BJ (cell line): ENCODE measurements at regions of chr11 and their contacts with region 1.

Region 1: GRCh38 chr11:114262681-114263512 is 33.3 kb upstream of the NNMT start:
- DNase-seq: no peak
- H3K4me3 ChIP-seq: no peak overlapping the region
- H3K27me3 ChIP-seq: peaks cover 9% of the 10 kb centered on the region
- CTCF ChIP-seq: peak; percentile 84

Region 2: DNA sequence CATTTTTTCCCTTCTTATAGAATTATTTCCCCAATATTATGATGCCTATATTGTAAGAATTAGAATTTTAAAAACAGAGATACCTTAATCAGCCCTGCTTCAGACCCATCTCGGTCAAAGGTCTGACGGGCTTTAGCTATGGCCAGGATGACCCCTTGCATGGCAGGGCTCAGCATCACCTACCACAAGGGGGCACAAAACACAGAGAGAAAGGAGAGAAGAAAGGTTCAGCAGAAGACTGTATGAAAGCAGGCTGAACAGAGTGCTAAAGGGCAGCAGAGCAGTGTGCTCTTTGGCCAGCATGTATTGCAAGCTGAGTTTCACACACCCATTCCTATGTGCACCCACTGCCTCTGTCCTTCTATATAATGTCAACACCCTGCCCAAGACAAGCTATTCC is 456.5 kb before region 1 on chr11:
- CTCF ChIA-PET with region 1: interaction called, 10 read pairs
- POLR2A ChIA-PET with region 1: no interaction called
- DNase-seq: no peak
- H3K4me3 ChIP-seq: no peak overlapping the region
- H3K27me3 ChIP-seq: no peaks in the 10 kb centered on the region
- CTCF ChIP-seq: peak; percentile 42

Region 3: GRCh38 chr11:113896156-113896879 is 366.6 kb before region 1 on chr11:
- CTCF ChIA-PET with region 1: interaction called, 213 read pairs
- POLR2A ChIA-PET with region 1: no interaction called
- DNase-seq: no peak
- H3K4me3 ChIP-seq: no peak overlapping the region
- H3K27me3 ChIP-seq: peaks cover 4% of the 10 kb centered on the region
- CTCF ChIP-seq: peak; percentile 80

Region 4: GRCh38 chr11:114001416-114001815 is 261.5 kb before region 1 on chr11:
- CTCF ChIA-PET with region 1: interaction called, 218 read pairs
- POLR2A ChIA-PET with region 1: interaction called, 3 read pairs
- DNase-seq: no peak
- H3K4me3 ChIP-seq: no peak overlapping the region
- H3K27me3 ChIP-seq: no peaks in the 10 kb centered on the region
- CTCF ChIP-seq: no peak

Region 5: GRCh38 chr11:114026355-114026754 is 236.5 kb before region 1 on chr11:
- CTCF ChIA-PET with region 1: interaction called, 88 read pairs
- POLR2A ChIA-PET with region 1: no interaction called
- DNase-seq: no peak
- H3K4me3 ChIP-seq: no peak overlapping the region
- H3K27me3 ChIP-seq: peaks cover 8% of the 10 kb centered on the region
- CTCF ChIP-seq: no peak

Region 6: GRCh38 chr11:114044042-114044871 is 218.6 kb before region 1 on chr11:
- CTCF ChIA-PET with region 1: interaction called, 206 read pairs
- POLR2A ChIA-PET with region 1: no interaction called
- DNase-seq: no peak
- H3K4me3 ChIP-seq: no peak overlapping the region
- H3K27me3 ChIP-seq: peaks cover 5% of the 10 kb centered on the region
- CTCF ChIP-seq: no peak

Region 7: DNA sequence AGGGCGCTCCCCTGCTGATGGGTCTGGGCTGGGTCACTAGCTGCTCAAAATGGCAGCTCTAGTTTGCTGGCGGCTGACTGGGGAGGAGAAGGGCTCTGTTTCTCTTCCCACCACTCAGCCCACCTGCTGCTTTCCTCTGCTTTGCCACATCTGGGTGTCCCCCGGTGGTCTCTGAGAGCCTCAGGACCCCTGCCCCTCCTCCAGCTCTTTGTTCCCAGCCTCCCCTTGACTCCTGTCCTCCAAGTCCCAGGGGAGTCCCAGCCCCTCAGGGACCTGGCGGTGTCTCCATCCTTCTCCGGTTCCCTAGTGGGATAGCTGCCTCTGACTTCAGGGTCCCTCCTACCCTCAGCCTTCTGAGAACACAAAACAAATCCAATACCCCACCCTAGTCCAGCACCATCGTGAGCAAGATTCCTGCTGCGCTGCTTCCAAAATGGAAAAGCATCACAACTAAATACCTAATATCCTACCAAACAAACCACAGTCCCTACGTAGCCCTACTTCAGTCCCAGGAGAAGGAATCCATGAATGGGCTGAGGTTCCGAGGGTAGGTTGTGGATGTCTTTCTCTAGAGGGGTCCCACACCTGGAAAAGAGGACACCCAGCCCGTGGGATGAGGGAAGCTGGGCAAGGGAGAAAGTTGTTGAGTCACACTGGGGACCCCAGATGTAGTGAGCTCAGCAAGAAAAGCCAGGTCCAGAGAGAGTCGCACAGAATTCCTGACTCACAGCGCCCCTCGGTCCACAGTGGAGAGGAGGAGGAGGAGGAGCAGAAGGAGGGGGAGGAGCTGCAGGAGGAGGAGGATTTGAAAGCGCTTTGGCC is 11.7 kb before region 1 on chr11:
- CTCF ChIA-PET with region 1: interaction called, 56 read pairs
- POLR2A ChIA-PET with region 1: no interaction called
- DNase-seq: no peak
- H3K4me3 ChIP-seq: no peak overlapping the region
- H3K27me3 ChIP-seq: no peaks in the 10 kb centered on the region; the same call in 1 of the 2 replicates
- CTCF ChIP-seq: no peak